CD4-positive, alpha-beta memory T cell (primary cell): ENCODE measurements at regions of chr1 and their contacts with region 1.

Region 1: GRCh38 chr1:22717037-22717760 is 6.6 kb downstream of the EPHB2 start:
- DNase-seq: no peak
- H3K4me3 ChIP-seq: no peak overlapping the region
- H3K4me3 Mint-ChIP-seq: no peak overlapping the region
- H3K27ac ChIP-seq: no peak overlapping the region
- H3K27ac Mint-ChIP-seq: no peak overlapping the region
- H3K4me1 ChIP-seq: peaks cover 1% of the 10 kb centered on the region
- H3K4me1 Mint-ChIP-seq: peaks cover 0 to 9% (median 4%) of the 10 kb centered on the region in 4 donors
- H3K27me3 ChIP-seq: peaks cover 10% of the 10 kb centered on the region
- H3K27me3 Mint-ChIP-seq: peaks cover 21 to 31% of the 10 kb centered on the region in 2 donors

Region 2: GRCh38 chr1:22704440-22705067 is 12.6 kb before region 1 on chr1:
- CTCF ChIA-PET with region 1: interaction called, 10 read pairs
- POLR2A ChIA-PET with region 1: no interaction called
- intact Hi-C with region 1: no loop called
- DNase-seq: peak; percentile 47 to 69 (median 52)
- H3K4me3 ChIP-seq: no peak overlapping the region
- H3K4me3 Mint-ChIP-seq: no peak overlapping the region
- H3K27ac ChIP-seq: no peak overlapping the region
- H3K27ac Mint-ChIP-seq: no peak overlapping the region
- H3K4me1 ChIP-seq: no peaks in the 10 kb centered on the region
- H3K4me1 Mint-ChIP-seq: peaks cover 0 to 9% (median under 1%) of the 10 kb centered on the region in 4 donors
- H3K27me3 ChIP-seq: peaks cover 2% of the 10 kb centered on the region
- H3K27me3 Mint-ChIP-seq: peaks cover 15 to 25% of the 10 kb centered on the region in 2 donors

Region 3: DNA sequence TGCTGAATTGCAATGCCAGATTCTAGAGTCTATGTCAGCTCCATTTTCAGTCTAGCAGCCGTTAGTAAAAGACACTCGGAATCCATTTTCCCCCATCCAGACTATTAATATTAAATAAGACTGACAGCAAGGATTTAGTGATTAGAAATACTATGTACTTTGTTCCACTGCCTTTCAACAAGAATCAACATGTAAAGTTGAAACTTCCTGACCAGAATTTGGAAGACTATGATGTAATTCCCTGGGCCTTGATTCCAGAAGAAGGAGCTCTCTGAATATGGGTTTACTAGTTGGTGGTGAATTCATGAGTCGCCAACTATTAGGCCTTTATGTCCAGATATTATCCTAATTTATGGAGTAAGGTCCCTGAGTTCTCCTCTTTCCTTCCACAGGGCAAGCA is 326.8 kb after region 1 on chr1:
- CTCF ChIA-PET with region 1: no interaction called
- POLR2A ChIA-PET with region 1: no interaction called
- intact Hi-C with region 1: no loop called
- DNase-seq: no peak
- H3K4me3 ChIP-seq: no peak overlapping the region
- H3K4me3 Mint-ChIP-seq: no peak overlapping the region
- H3K27ac ChIP-seq: no peak overlapping the region
- H3K27ac Mint-ChIP-seq: no peak overlapping the region
- H3K4me1 ChIP-seq: peaks cover 9% of the 10 kb centered on the region
- H3K4me1 Mint-ChIP-seq: peaks cover 16 to 27% (median 25%) of the 10 kb centered on the region in 4 donors
- H3K27me3 ChIP-seq: no peaks in the 10 kb centered on the region
- H3K27me3 Mint-ChIP-seq: no peaks in the 10 kb centered on the region